Heart left ventricle (tissue), 16 donors: ENCODE measurements at regions of chr3 and their contacts with region 1.

Region 1: DNA sequence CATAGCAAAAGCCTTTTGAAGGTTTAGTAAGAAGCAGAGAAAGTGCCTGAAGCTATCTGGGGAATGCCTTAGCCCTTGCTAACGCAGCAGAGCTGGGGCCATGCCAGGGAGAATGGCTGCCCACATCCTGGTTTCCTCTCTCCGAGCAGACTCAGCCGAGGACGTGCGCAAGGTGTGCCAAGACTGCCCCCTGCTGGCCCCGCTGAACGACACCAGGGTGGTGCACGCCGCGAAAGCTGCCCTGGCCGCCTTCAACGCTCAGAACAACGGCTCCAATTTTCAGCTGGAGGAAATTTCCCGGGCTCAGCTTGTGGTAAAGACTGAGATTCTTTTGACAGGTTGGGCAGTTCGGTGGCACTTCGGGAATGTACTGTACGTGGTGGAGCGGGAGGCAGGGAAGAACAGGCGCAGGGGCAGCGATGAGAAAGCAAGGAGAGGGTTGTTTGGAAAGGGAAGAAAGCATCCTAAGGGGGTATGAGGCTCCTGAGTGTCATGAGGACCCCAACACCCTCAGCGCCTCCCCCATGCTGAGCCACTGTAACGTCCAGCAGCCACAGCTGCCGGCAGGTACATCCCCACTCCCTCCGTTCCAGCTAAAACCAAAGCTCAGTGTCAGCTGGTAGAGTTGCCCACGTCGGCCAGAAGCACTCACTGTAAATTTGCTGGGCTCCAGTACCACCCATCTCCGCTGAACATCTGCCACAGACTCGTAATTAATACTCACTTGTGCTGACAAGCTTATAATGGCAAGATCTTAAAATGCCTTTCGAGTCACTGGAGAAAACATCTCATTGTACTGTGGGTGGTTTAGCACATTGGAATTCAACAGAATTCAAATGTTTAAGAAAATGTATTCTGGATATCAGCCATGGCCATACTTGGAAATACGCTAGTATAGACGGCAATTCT is 4.4 kb downstream of the AHSG start:
- DNase-seq: peak; percentile 75 to 92 (median 84)
- ATAC-seq: peak; percentile 83 to 97 (median 96)
- H3K4me3 ChIP-seq: peak overlapping the region in 5 of 12 donors; percentile 2 to 30 (median 27)
- H3K27ac ChIP-seq: peak overlapping the region in 1 of 12 donors; percentile 25
- H3K4me1 ChIP-seq: peaks cover 0 to 19% (median 4%) of the 10 kb centered on the region in 12 donors
- H3K27me3 ChIP-seq: peaks cover 0 to 46% (median 0%) of the 10 kb centered on the region in 9 donors
- CTCF ChIP-seq: peak; percentile 74 to 90 (median 82)
- POLR2A ChIP-seq: no peak

Region 2: DNA sequence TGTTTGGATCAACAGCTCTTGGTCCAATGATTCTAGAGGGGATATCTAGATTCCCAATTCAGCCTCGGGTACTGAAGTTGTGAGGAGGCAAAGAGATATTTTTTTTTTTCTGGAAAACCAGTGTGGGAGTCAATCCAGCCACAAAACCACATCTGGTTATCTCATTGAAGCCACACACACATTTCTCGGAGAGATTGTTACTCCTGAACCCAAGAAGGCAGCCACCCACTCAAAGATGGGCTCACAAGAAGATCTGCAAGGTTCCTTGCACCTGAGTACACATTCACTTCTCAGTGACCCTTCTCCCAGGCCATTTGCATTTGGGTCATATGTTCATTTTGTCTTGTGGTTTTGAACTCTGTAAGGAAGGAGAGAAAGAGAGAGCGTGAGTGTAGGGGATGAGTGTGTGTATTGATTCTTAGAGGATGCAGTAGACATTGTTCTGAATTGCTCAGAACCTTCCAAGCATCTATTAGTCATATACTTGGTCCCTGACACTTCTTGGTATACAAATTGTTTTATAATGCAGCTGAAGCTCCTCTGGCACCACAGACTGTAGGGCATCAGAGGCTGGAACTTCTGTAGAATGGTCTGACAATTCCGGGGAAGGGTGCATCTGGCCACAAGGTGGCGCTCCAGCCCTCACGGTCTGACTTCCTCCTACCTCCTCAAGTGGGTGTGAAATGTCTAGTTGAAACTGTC is 640.2 kb before region 1 on chr3:
- intact Hi-C with region 1: loop called in 5 of 10 experiments (anchors 2 to 10 kb)
- DNase-seq: peak; percentile 68 to 87 (median 69)
- ATAC-seq: peak in 3 of 4 donors; percentile 75 to 87 (median 79)
- H3K4me3 ChIP-seq: no peak overlapping the region
- H3K27ac ChIP-seq: no peak overlapping the region
- H3K4me1 ChIP-seq: peaks cover 0 to 6% (median 0%) of the 10 kb centered on the region in 12 donors
- H3K27me3 ChIP-seq: no peaks in the 10 kb centered on the region
- CTCF ChIP-seq: peak; percentile 77 to 93 (median 87)
- POLR2A ChIP-seq: no peak

Region 3: DNA sequence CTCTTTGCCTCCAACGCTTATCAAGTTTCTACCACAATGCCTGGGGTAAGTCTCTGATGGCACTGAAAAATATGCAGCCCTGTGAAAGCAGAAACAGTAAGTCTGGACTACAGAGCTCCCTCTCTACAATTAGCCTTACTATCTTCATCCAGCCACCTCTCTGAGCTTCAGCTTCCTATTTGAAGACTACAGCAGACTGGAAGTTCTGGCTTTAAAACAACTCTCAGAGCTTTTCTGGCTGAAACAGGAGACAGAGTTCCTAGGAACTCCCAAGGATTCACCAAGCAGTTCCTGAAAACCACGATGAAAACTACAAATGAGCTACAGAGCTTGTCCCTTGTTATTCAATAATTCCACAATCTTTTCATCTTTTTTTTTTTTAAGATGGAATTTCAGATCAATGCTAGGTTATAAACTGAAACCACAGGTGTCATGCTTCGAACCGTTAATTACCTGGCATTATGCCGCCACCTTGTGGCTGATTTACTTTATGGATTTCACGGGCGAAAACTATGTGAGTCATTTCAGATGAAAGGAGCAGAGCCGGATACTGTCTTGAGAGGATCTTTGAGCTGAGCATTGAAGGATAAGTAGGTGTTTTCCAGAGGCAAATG is 77.0 kb before region 1 on chr3:
- intact Hi-C with region 1: loop called in 1 of 10 experiments (anchors 2 kb)
- DNase-seq: peak in 4 of 5 donors; percentile 36 to 64 (median 54)
- ATAC-seq: peak; percentile 53 to 82 (median 80)
- H3K4me3 ChIP-seq: peak overlapping the region in 5 of 12 donors; percentile 11 to 42 (median 26)
- H3K27ac ChIP-seq: no peak overlapping the region
- H3K4me1 ChIP-seq: peaks cover 0 to 23% (median 14%) of the 10 kb centered on the region in 12 donors
- H3K27me3 ChIP-seq: no peaks in the 10 kb centered on the region
- CTCF ChIP-seq: peak; percentile 59 to 79 (median 70)
- POLR2A ChIP-seq: no peak

Region 4: DNA sequence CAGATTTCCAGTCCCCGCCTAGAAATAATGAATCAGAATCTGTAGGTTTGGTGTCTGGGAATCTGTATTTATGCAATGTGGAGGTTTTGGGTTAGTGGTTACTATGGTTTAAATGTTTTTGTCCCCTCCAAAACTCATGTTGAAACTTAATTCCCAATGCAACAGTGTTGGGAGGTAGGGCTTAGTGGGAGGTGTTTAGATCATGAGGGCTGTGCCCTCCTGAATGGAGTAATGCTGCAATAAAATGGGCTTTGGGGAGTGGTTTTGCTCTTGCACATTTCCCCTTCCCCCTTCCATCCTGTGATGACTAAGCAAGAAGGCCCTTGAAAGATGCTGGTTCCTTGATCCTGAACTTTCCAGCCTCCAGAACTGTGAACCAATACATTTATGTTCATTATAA is 198.1 kb after region 1 on chr3:
- intact Hi-C with region 1: loop called in 9 of 10 experiments (anchors 2 to 5 kb)
- DNase-seq: no peak
- ATAC-seq: no peak
- H3K4me3 ChIP-seq: no peak overlapping the region
- H3K27ac ChIP-seq: no peak overlapping the region
- H3K4me1 ChIP-seq: no peaks in the 10 kb centered on the region
- H3K27me3 ChIP-seq: peaks cover 0 to 4% (median 0%) of the 10 kb centered on the region in 9 donors
- CTCF ChIP-seq: no peak
- POLR2A ChIP-seq: no peak

Region 5: GRCh38 chr3:187164885-187165543 is 547.7 kb after region 1 on chr3:
- intact Hi-C with region 1: loop called in 4 of 10 experiments (anchors 10 kb)
- DNase-seq: peak in 1 of 5 donors; percentile 31
- ATAC-seq: peak in 3 of 4 donors; percentile 18 to 45 (median 35)
- H3K4me3 ChIP-seq: no peak overlapping the region
- H3K27ac ChIP-seq: no peak overlapping the region
- H3K4me1 ChIP-seq: peaks cover 0 to 25% (median 6%) of the 10 kb centered on the region in 12 donors
- H3K27me3 ChIP-seq: no peaks in the 10 kb centered on the region
- CTCF ChIP-seq: peak; percentile 54 to 87 (median 77)
- POLR2A ChIP-seq: no peak